IMR-90 (cell line): ENCODE measurements at regions of chr6 and their contacts with region 1.

Region 1: GRCh38 chr6:158686791-158687381 is 37.0 kb downstream of the SYTL3 start:
- DNase-seq: no peak
- ATAC-seq: no peak
- H3K4me3 ChIP-seq: no peak overlapping the region
- H3K27ac ChIP-seq: no peak overlapping the region
- H3K4me1 ChIP-seq: peaks cover 2% of the 10 kb centered on the region; the same call in 1 of the 2 replicates
- H3K27me3 ChIP-seq: no peaks in the 10 kb centered on the region
- CTCF ChIP-seq: no peak
- POLR2A ChIP-seq: no peak
- RAD21 ChIP-seq: no peak

Region 2: DNA sequence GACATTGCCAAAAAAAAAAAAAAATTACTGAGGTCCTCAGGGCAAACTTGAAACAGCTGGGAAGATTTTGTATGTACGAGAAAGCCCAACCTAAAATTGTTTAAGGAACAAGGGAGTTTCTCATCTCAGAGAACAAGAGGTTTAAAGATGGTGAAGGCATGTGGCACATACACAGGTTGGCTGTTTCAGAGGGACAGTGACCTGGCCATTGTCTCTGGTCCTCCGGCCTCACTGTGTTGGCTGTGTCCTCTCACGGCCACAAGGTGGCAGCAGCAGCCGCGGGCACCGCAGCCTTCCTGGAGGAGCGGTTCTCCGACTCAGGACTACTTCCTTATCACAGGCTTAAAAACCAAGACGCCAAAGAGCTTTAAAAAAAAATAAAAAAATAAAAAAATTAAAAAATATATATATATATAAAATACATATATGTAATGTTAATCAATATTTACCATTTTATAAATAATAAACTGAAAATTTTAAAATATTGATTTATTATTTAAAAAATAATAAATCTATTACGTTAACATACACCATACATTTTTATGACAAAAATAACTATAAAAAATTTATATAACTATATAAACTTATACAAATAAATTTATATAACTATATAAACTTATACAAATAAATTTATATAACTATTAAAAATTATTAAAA is 466.0 kb before region 1 on chr6:
- CTCF ChIA-PET with region 1: interaction called, 14 read pairs
- POLR2A ChIA-PET with region 1: no interaction called
- dilution Hi-C with region 1: no loop called
- in situ Hi-C with region 1: loop called (anchors 10 kb)
- intact Hi-C with region 1: loop called (anchors 1 kb)
- DNase-seq: peak; percentile 78
- ATAC-seq: peak; percentile 92
- H3K4me3 ChIP-seq: no peak overlapping the region
- H3K27ac ChIP-seq: no peak overlapping the region
- H3K4me1 ChIP-seq: peaks cover 3% of the 10 kb centered on the region
- H3K27me3 ChIP-seq: no peaks in the 10 kb centered on the region; the same call in 1 of the 2 replicates
- CTCF ChIP-seq: peak; percentile 93
- POLR2A ChIP-seq: peak; percentile 55; the same call in 1 of the 2 replicates
- RAD21 ChIP-seq: peak; percentile 99

Region 3: DNA sequence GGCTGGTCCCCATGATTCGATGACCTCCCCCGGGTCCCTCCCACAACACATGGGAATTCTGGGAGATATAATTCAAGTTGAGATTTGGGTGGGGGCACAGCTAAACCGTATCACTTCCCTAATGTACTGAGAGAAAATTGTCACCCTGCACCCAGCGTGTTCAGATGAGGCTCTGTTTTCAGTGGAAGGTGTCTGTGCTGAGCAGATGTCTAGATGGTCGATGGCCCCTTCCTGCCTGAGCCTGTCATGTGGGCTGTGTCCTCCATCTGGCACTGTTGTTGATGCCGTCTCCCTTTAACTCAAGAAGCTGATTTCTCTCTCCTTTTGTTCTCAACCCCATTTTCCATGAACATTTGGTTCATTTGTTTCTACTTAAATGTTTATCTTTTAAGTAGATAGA is 90.0 kb before region 1 on chr6:
- CTCF ChIA-PET with region 1: no interaction called
- POLR2A ChIA-PET with region 1: no interaction called
- dilution Hi-C with region 1: no loop called
- in situ Hi-C with region 1: no loop called
- intact Hi-C with region 1: loop called (anchors 1 kb)
- DNase-seq: no peak
- ATAC-seq: no peak
- H3K4me3 ChIP-seq: no peak overlapping the region
- H3K27ac ChIP-seq: no peak overlapping the region
- H3K4me1 ChIP-seq: peaks cover 3% of the 10 kb centered on the region; the same call in 1 of the 2 replicates
- H3K27me3 ChIP-seq: no peaks in the 10 kb centered on the region
- CTCF ChIP-seq: no peak
- POLR2A ChIP-seq: no peak
- RAD21 ChIP-seq: no peak

Region 4: GRCh38 chr6:158644231-158645063 is 42.4 kb before region 1 on chr6 and contains the start of gene DYNLT1:
- CTCF ChIA-PET with region 1: interaction called, 9 read pairs
- POLR2A ChIA-PET with region 1: no interaction called
- dilution Hi-C with region 1: no loop called
- in situ Hi-C with region 1: no loop called
- intact Hi-C with region 1: loop called (anchors 2 kb)
- DNase-seq: peak; percentile 84
- ATAC-seq: peak; percentile 83
- H3K4me3 ChIP-seq: peak within 1 kb of the TSS; percentile 95
- H3K27ac ChIP-seq: peak within 1 kb of the TSS; percentile 98
- H3K4me1 ChIP-seq: peaks cover 25% of the 10 kb centered on the region
- H3K27me3 ChIP-seq: no peaks in the 10 kb centered on the region
- CTCF ChIP-seq: no peak
- POLR2A ChIP-seq: peak; percentile 94
- RAD21 ChIP-seq: no peak
- total RNA-seq, gene DYNLT1: 187 and 235 TPM in 2 replicates

Region 5: GRCh38 chr6:158660333-158660754 is 26.5 kb before region 1 on chr6:
- CTCF ChIA-PET with region 1: interaction called, 12 read pairs
- POLR2A ChIA-PET with region 1: no interaction called
- dilution Hi-C with region 1: no loop called
- in situ Hi-C with region 1: no loop called
- intact Hi-C with region 1: no loop called
- DNase-seq: no peak
- ATAC-seq: 0 out of 2 replicates have a peak, but pooled peaks have one; percentile 52
- H3K4me3 ChIP-seq: no peak overlapping the region
- H3K27ac ChIP-seq: no peak overlapping the region
- H3K4me1 ChIP-seq: peaks cover 15% of the 10 kb centered on the region
- H3K27me3 ChIP-seq: no peaks in the 10 kb centered on the region
- CTCF ChIP-seq: peak; percentile 49
- POLR2A ChIP-seq: no peak
- RAD21 ChIP-seq: peak; percentile 40

Region 6: GRCh38 chr6:158674342-158675131 is 12.3 kb before region 1 on chr6:
- CTCF ChIA-PET with region 1: interaction called, 5 read pairs
- POLR2A ChIA-PET with region 1: interaction called, 12 read pairs
- dilution Hi-C with region 1: no loop called
- in situ Hi-C with region 1: no loop called
- intact Hi-C with region 1: no loop called
- DNase-seq: no peak
- ATAC-seq: no peak
- H3K4me3 ChIP-seq: no peak overlapping the region
- H3K27ac ChIP-seq: no peak overlapping the region
- H3K4me1 ChIP-seq: no peaks in the 10 kb centered on the region
- H3K27me3 ChIP-seq: no peaks in the 10 kb centered on the region
- CTCF ChIP-seq: no peak
- POLR2A ChIP-seq: no peak
- RAD21 ChIP-seq: no peak